Endothelial cell of umbilical vein (primary cell): ENCODE measurements at regions of chr20 and their contacts with region 1.

Region 1: GRCh38 chr20:13261460-13262301 is 40.6 kb downstream of the ISM1 start:
- DNase-seq: peak; percentile 49
- H3K4me3 ChIP-seq: no peak overlapping the region
- H3K27ac ChIP-seq: no peak overlapping the region
- H3K4me1 ChIP-seq: peaks cover 12% of the 10 kb centered on the region
- H3K27me3 ChIP-seq: peaks cover 0 to 2% of the 10 kb centered on the region in 2 experiments
- CTCF ChIP-seq: peak; percentile 88 to 92
- POLR2A ChIP-seq: no peak

Region 2: GRCh38 chr20:13119583-13119982 is 142.1 kb before region 1 on chr20:
- CTCF ChIA-PET with region 1: interaction called, 7 read pairs
- POLR2A ChIA-PET with region 1: no interaction called
- dilution Hi-C with region 1: no loop called
- intact Hi-C with region 1: loop called (anchors 1 kb)
- DNase-seq: peak; percentile 64
- H3K4me3 ChIP-seq: no peak overlapping the region
- H3K27ac ChIP-seq: no peak overlapping the region
- H3K4me1 ChIP-seq: no peaks in the 10 kb centered on the region
- H3K27me3 ChIP-seq: no peaks in the 10 kb centered on the region
- CTCF ChIP-seq: peak; percentile 68 to 76
- POLR2A ChIP-seq: no peak

Region 3: DNA sequence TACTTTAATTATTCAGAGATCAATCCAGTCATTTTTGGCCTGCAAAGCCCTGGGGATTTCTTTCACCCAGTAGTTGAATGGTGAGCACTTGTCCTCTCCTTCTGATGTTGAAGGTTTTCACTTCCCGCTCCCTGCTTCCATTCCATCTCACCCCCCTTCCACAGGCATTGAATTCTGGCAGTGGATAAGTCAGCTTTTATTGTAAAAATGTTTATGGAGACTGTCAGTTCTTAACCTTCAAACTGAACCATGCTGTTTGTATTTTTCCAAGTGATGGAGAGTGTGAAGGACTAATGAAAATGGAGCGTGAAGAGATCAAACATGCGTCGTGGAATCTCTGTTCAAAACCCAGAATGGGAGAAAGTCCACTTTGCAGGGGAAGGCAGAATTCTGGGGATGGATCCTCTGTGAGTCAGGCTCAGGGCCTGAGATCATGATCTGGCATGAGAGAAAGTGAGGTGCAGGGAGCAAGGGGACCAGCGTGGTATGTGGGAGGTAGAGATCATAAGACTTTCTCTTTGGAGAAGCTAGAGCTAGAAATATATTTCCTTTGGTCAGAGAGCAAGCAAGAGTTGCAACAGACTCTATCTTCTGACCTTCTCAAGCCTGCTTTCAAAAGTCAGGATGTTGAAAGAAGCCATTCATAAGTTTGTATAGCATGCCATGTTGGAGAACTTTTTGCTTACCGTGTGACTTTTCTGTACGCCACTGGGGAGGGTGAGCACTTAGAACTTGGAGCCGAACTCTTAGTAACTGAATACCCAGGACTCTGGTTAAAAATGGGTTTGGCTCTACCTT is 10.4 kb before region 1 on chr20:
- CTCF ChIA-PET with region 1: interaction called, 24 read pairs
- POLR2A ChIA-PET with region 1: no interaction called
- dilution Hi-C with region 1: no loop called
- intact Hi-C with region 1: no loop called
- DNase-seq: no peak
- H3K4me3 ChIP-seq: no peak overlapping the region
- H3K27ac ChIP-seq: no peak overlapping the region
- H3K4me1 ChIP-seq: peaks cover 12% of the 10 kb centered on the region
- H3K27me3 ChIP-seq: peaks cover 0 to 3% of the 10 kb centered on the region in 2 experiments
- CTCF ChIP-seq: no peak
- POLR2A ChIP-seq: no peak

Region 4: GRCh38 chr20:13271977-13272975 is 10.6 kb after region 1 on chr20:
- CTCF ChIA-PET with region 1: interaction called, 23 read pairs
- POLR2A ChIA-PET with region 1: no interaction called
- dilution Hi-C with region 1: no loop called
- intact Hi-C with region 1: no loop called
- DNase-seq: no peak
- H3K4me3 ChIP-seq: no peak overlapping the region
- H3K27ac ChIP-seq: no peak overlapping the region
- H3K4me1 ChIP-seq: peaks cover 18% of the 10 kb centered on the region
- H3K27me3 ChIP-seq: peaks cover 0 to 13% of the 10 kb centered on the region in 2 experiments
- CTCF ChIP-seq: no peak
- POLR2A ChIP-seq: no peak